Activated CD8-positive, alpha-beta T cell treated with anti-CD3 and anti-CD28 coated beads for 36 hours (primary cell): ENCODE measurements at regions of chr1 and their contacts with region 1.

Region 1: GRCh38 chr1:92858564-92859399 is 26.9 kb downstream of the RPL5 start:
- DNase-seq: peak; percentile 68
- ATAC-seq: peak; percentile 95
- H3K4me3 Mint-ChIP-seq: peak overlapping the region; percentile 36
- H3K27ac Mint-ChIP-seq: peak overlapping the region; percentile 63
- H3K4me1 Mint-ChIP-seq: peaks cover 20% of the 10 kb centered on the region
- H3K27me3 Mint-ChIP-seq: no peaks in the 10 kb centered on the region
- CTCF ChIP-seq: peak; percentile 95

Region 2: DNA sequence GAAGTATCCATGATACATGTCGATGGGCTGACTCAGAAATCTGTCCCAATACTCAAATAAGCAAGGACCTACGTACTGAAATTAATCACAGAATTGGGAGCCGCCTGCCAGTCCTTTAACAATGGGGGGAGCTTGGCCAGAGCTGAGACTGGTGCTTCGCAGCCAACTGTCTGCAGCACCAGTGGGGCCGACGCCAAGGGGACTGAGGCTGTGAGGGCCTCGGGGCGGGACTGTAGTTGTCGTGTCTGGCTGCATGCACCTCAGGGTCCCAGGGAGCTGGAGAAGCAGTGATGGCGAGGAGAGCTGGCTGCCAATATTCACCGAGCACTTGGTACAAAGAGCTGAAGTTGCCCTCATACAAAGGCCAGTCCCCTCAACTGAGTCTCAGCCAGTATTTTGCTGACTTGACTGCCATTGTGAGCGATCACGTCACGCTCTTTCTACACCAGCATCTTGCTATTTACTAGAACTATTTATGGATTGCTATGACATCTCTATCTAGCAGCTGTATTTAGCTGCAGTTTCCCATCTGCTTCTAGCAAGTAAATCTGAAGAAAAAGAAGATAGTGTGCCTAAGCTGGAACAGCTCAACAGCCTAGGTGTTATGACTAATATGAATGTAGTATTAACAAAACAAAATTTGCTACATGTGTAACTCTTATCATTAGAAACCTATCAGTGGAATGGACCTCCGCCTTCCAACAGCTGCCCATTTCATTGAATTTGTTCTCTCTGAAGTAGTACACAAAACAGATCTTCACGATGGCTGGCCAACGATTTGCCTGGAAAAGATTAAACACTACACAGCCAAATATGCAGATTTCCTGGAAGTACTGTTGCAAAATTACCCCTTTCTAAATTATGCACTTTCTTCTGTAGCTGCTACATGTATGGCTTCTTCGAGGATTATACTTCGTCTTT is 103.0 kb before region 1 on chr1:
- CTCF ChIA-PET with region 1: no interaction called
- POLR2A ChIA-PET with region 1: no interaction called
- intact Hi-C with region 1: no loop called
- DNase-seq: no peak
- ATAC-seq: no peak
- H3K4me3 Mint-ChIP-seq: no peak overlapping the region
- H3K27ac Mint-ChIP-seq: no peak overlapping the region
- H3K4me1 Mint-ChIP-seq: no peaks in the 10 kb centered on the region
- H3K27me3 Mint-ChIP-seq: peaks cover 4% of the 10 kb centered on the region
- CTCF ChIP-seq: no peak

Region 3: DNA sequence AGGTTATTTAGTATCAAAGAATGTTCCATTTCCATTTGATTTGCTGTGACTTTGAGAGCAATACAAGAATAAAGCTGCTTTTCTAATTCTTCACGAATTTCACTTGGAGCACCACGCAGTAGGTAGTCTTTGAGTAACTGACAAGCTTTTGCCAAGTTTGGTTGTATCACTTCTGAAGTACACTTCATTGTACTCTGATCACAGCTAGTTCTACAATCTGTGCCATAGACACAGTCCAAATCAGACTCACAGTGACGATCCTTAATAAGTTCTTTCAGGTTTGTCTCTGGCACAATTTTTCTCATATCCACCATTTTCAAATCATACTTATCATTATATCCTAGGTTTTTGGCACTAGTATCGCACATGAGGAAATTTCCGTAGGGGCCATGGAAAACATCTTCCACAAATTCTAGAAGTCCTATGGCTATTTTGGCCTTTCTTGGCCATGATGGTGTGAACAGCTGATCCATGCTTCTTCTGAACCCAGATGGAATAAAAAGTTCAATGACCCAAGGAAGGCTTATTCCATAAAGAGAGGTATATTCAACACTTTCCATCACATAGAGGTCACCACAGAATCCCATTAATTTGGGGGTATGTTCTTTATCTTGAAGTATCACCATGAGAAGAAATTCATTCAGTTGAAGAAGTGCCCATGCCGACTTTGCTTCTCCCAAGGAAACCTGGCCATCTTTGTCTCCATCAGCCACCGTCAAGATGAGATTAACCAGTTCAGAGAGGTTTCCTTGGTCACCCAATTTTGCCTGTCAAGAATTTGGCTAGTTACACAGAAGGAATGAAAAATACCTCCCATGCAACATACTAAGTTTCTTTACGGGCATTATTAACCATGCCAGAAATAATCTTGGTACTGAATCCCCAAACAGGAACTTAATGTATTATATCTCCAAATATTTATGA is 15.1 kb before region 1 on chr1:
- CTCF ChIA-PET with region 1: interaction called, 13 read pairs
- POLR2A ChIA-PET with region 1: interaction called, 3 read pairs
- intact Hi-C with region 1: no loop called
- DNase-seq: no peak
- ATAC-seq: no peak
- H3K4me3 Mint-ChIP-seq: no peak overlapping the region
- H3K27ac Mint-ChIP-seq: no peak overlapping the region
- H3K4me1 Mint-ChIP-seq: peaks cover 21% of the 10 kb centered on the region
- H3K27me3 Mint-ChIP-seq: no peaks in the 10 kb centered on the region
- CTCF ChIP-seq: no peak

Region 4: DNA sequence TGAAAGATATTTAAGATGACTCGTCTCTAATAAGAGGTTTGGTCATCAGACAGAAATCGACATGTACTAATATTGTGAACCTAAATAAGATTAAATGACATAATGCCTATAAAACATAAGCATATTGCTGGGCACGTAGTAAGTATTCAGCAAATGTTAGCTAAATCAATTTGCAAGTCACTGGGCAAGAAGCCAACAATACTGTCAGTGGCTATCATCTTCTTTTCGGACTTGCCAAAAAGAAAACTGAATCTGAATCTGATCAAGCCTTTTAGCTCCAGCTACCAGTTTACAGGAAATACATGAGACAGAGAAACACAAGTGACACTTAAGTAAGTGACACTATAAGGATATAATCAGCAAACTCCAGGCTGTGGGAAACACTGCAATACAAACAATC is 19.0 kb after region 1 on chr1:
- CTCF ChIA-PET with region 1: interaction called, 25 read pairs
- POLR2A ChIA-PET with region 1: no interaction called
- intact Hi-C with region 1: no loop called
- DNase-seq: no peak
- ATAC-seq: peak; percentile 66
- H3K4me3 Mint-ChIP-seq: peak overlapping the region; percentile 34
- H3K27ac Mint-ChIP-seq: peak overlapping the region; percentile 84
- H3K4me1 Mint-ChIP-seq: peaks cover 25% of the 10 kb centered on the region
- H3K27me3 Mint-ChIP-seq: no peaks in the 10 kb centered on the region
- CTCF ChIP-seq: no peak

Region 5: DNA sequence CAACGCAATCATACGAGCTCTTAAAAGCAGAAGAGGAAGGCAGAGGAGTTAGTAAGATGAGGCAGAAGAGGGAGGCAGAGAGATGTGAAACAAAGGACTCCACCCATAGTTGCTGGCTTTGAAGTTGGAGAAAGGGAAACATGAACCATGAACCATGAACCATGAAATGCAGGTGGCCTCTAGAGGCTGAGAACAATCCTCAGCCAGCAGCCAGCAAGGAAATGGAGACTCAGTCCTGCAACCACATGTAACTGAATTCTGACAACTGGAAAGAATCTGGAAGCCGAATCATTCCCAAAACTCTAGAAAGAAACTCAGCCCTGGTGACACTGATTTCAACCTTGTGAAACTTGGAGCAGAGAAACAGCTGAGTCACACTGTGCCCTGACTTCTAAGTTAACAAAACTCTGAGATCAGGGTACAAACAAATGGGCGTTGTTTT is 92.4 kb after region 1 on chr1:
- CTCF ChIA-PET with region 1: interaction called, 175 read pairs
- POLR2A ChIA-PET with region 1: interaction called, 3 read pairs
- intact Hi-C with region 1: no loop called
- DNase-seq: peak; percentile 20
- ATAC-seq: peak; percentile 69
- H3K4me3 Mint-ChIP-seq: no peak overlapping the region
- H3K27ac Mint-ChIP-seq: no peak overlapping the region
- H3K4me1 Mint-ChIP-seq: peaks cover 43% of the 10 kb centered on the region
- H3K27me3 Mint-ChIP-seq: no peaks in the 10 kb centered on the region
- CTCF ChIP-seq: no peak

Region 6: GRCh38 chr1:92968138-92969032 is 109.6 kb after region 1 on chr1:
- CTCF ChIA-PET with region 1: interaction called, 175 read pairs
- POLR2A ChIA-PET with region 1: no interaction called
- intact Hi-C with region 1: no loop called
- DNase-seq: no peak
- ATAC-seq: peak; percentile 64
- H3K4me3 Mint-ChIP-seq: no peak overlapping the region
- H3K27ac Mint-ChIP-seq: peak overlapping the region; percentile 36
- H3K4me1 Mint-ChIP-seq: peaks cover 36% of the 10 kb centered on the region
- H3K27me3 Mint-ChIP-seq: no peaks in the 10 kb centered on the region
- CTCF ChIP-seq: peak; percentile 84

Region 7: DNA sequence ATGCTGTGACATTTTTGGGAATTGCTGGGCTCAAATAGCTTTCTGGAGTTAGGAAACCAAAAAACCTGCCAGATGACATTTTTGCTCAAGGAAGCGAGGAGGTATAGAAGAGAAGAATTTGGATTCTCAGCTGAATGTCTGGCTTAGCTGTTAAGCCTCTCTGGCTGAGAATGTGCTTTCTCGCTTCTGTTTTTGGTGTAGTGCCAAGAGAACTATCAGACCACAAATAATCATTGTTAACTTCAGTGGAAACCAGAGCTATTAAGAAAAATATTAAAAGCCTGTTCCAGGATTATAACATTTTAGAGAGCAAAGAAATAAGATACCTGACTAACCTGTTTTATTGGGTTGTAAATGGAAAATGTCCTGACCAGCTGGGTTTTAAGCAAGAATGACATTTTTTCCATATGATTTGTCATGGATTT is 142.0 kb after region 1 on chr1:
- CTCF ChIA-PET with region 1: interaction called, 12 read pairs
- POLR2A ChIA-PET with region 1: no interaction called
- intact Hi-C with region 1: no loop called
- DNase-seq: no peak
- ATAC-seq: no peak
- H3K4me3 Mint-ChIP-seq: no peak overlapping the region
- H3K27ac Mint-ChIP-seq: no peak overlapping the region
- H3K4me1 Mint-ChIP-seq: no peaks in the 10 kb centered on the region
- H3K27me3 Mint-ChIP-seq: peaks cover 2% of the 10 kb centered on the region
- CTCF ChIP-seq: no peak

Region 8: GRCh38 chr1:93015590-93015989 is 156.8 kb after region 1 on chr1:
- CTCF ChIA-PET with region 1: interaction called, 13 read pairs
- POLR2A ChIA-PET with region 1: no interaction called
- intact Hi-C with region 1: no loop called
- DNase-seq: no peak
- ATAC-seq: no peak
- H3K4me3 Mint-ChIP-seq: no peak overlapping the region
- H3K27ac Mint-ChIP-seq: no peak overlapping the region
- H3K4me1 Mint-ChIP-seq: no peaks in the 10 kb centered on the region
- H3K27me3 Mint-ChIP-seq: peaks cover 2% of the 10 kb centered on the region
- CTCF ChIP-seq: no peak

Region 9: DNA sequence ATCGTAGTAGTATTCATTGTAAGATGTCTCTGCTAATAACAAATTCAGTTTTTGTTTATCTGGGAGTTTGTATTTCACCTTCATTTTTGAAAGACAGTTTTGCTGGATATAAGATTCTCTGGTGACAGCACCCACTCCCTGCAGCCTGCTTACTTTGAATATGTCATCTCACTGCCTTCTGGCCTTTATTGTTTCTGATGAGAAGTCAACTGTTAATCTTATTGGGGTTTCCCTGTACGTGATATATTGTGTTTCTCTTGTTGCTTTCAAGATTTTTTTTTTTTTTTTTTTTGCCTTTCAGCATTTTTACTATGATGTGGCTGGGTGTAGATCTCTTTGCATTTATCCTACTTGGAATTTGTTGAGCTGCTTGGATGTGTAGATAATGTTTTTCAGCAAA is 249.6 kb after region 1 on chr1:
- CTCF ChIA-PET with region 1: no interaction called
- POLR2A ChIA-PET with region 1: no interaction called
- intact Hi-C with region 1: no loop called
- DNase-seq: no peak
- ATAC-seq: no peak
- H3K4me3 Mint-ChIP-seq: no peak overlapping the region
- H3K27ac Mint-ChIP-seq: no peak overlapping the region
- H3K4me1 Mint-ChIP-seq: peaks cover 29% of the 10 kb centered on the region
- H3K27me3 Mint-ChIP-seq: no peaks in the 10 kb centered on the region
- CTCF ChIP-seq: no peak